Aorta (tissue), 5 donors: ENCODE measurements at regions of chr6 and their contacts with region 1.

Region 1: GRCh38 chr6:130020907-130021629 is 2.7 kb downstream of the L3MBTL3 start:
- DNase-seq: peak; percentile 83 to 86
- ATAC-seq: peak; percentile 94
- H3K4me3 ChIP-seq: peak overlapping the region; percentile 79 to 92
- H3K27ac ChIP-seq: peak overlapping the region in 1 of 2 donors; percentile 17
- H3K4me1 ChIP-seq: no peaks in the 10 kb centered on the region
- H3K27me3 ChIP-seq: no peaks in the 10 kb centered on the region

Region 2: GRCh38 chr6:129490521-129491245 is 530.4 kb before region 1 on chr6:
- intact Hi-C with region 1: loop called in 1 of 2 experiments (anchors 5 kb)
- DNase-seq: peak in 1 of 2 donors; percentile 50
- ATAC-seq: peak; percentile 92
- H3K4me3 ChIP-seq: peak overlapping the region in 1 of 2 donors; percentile 16
- H3K27ac ChIP-seq: peak overlapping the region; percentile 61 to 74
- H3K4me1 ChIP-seq: peaks cover 0 to 2% of the 10 kb centered on the region in 2 donors
- H3K27me3 ChIP-seq: no peaks in the 10 kb centered on the region

Region 3: DNA sequence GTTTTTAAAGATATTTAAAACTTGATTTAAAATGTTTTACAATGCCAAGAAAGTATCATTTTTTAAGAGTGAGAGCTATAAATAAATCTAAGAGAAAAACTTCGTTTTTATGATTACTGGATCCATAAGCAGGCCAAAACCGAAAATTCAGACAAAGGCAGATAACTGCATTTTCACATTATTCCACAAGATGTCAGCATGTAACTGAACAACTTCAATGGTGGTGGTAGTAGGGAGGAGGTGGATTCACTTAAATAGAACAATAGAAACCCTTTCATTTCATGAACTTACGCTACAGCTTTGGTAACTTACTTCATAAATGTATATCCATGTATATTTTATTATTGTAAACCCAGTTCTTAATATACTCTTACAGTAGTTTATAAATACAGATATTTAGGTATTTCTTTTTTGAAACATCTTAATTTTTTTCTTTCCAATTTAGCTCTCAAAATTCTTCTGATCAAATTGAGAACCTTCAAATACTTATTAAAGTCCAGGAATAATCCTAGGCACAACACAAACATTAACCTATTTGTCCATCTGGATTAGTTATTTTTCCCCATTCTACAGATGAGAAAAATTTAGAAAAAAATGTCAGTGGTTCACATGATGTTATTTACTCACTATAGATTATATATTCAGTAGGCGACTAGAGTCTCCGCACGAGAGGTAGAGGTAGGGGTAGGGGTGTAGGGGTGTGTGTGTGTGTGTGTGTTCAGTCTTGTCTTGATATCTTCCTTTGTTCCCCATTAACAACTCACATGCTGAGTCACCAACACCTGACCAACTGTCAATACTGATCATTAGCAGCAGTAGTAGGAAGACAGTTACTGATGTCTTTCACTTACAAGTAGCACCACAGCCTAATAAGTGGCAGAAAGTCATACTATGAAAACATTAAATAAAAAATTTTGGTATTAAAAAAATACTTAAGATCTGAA is 422.6 kb before region 1 on chr6:
- intact Hi-C with region 1: loop called in 1 of 2 experiments (anchors 5 kb)
- DNase-seq: no peak
- ATAC-seq: peak; percentile 83
- H3K4me3 ChIP-seq: no peak overlapping the region
- H3K27ac ChIP-seq: no peak overlapping the region
- H3K4me1 ChIP-seq: no peaks in the 10 kb centered on the region
- H3K27me3 ChIP-seq: no peaks in the 10 kb centered on the region

Region 4: GRCh38 chr6:129774697-129775447 is 246.2 kb before region 1 on chr6:
- intact Hi-C with region 1: loop called in 1 of 2 experiments (anchors 10 kb)
- DNase-seq: peak; percentile 78 to 79
- ATAC-seq: peak; percentile 86
- H3K4me3 ChIP-seq: no peak overlapping the region
- H3K27ac ChIP-seq: no peak overlapping the region
- H3K4me1 ChIP-seq: no peaks in the 10 kb centered on the region
- H3K27me3 ChIP-seq: no peaks in the 10 kb centered on the region

Region 5: DNA sequence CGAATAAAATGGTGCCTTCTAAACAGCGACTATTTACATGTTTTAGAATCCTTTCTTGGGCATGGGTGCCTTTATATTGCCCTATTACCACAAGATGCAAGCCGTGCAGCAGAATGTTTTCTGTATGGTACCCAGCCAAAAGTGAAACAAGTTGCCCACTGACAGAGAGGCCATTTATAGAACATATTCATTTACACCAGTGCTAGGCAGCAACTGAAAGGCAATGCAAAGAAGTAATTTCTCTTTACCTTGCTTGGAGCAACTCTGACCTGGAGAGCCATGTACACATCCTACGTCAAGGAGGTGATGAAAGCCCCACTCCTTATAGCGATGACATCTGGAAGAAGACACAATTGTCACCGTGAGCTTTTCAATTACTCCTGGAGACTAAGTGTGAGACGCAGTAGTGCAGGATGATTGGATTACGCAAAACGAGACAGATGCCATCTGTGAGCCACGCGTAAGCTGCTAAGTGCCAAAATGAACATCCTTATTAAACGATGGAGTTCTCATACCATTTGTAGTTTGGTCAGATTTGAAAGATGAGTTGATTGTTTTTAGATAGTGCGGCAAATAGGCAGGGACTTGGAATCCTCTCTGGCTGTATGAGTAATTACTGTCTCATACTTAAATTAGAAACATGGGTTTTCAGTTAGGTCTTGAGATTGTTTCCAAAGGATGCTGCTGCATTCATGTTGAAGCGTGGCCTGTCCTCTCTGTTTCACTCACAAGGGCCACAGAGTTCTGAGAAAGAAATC is 160.0 kb before region 1 on chr6 and contains the start of gene TMEM244:
- intact Hi-C with region 1: no loop called
- DNase-seq: no peak
- ATAC-seq: no peak
- H3K4me3 ChIP-seq: no peak within 1 kb of the TSS
- H3K27ac ChIP-seq: no peak within 1 kb of the TSS
- H3K4me1 ChIP-seq: no peaks in the 10 kb centered on the region
- H3K27me3 ChIP-seq: no peaks in the 10 kb centered on the region
- total RNA-seq, gene TMEM244: not detected

Region 6: GRCh38 chr6:129893640-129894039 is 127.4 kb before region 1 on chr6:
- intact Hi-C with region 1: loop called in 1 of 2 experiments (anchors 10 kb)
- DNase-seq: no peak
- ATAC-seq: no peak
- H3K4me3 ChIP-seq: no peak overlapping the region
- H3K27ac ChIP-seq: no peak overlapping the region
- H3K4me1 ChIP-seq: no peaks in the 10 kb centered on the region
- H3K27me3 ChIP-seq: no peaks in the 10 kb centered on the region